ENCODE measurements at regions of chr18 and their contacts with region 1.

Region 1: DNA sequence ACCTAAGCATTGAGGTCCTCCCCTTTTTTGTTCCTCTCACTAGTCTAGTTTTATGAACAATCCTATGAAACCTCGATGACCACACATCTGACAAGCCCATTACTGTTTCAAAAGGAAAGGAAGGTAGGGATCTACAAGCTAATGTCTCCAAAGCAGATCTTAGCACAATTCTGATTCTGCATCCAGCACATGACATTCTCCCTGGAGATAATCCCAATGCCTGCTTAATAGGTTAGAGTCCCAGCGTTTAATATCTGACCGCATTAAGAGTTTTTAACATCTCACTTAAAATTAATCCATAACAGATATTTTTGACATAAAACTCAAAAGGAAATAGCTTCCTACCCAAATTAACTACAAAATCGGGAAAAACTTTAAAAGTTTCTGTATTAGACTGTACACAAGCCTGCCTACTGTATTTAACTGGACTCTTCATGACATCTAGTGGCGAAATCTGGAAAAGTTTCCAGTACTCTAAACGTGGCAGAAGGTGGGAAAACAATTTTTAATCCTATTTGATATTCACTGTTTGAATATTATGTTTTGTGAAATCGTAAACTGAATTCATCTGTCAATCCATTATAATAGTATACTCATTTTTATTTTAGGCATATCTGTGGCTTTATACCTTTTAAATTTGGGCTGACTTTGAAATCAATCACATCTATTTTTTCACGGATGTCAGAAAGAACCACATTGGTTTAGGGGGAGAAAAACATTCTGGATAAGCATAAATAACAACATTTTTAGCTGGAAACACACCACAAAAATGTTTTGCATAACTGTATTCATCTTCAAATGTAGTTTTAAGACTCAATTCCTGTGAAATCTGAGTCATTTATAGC is 62.4 kb downstream of the TXNL1 start:
- DNase-seq: peak; percentile 68
- ATAC-seq: peak; percentile 54
- H3K4me3 ChIP-seq: no peak overlapping the region
- H3K4me3 Mint-ChIP-seq: no peak overlapping the region
- H3K27ac ChIP-seq: no peak overlapping the region
- H3K27ac Mint-ChIP-seq: no peak overlapping the region
- H3K4me1 ChIP-seq: no peaks in the 10 kb centered on the region
- H3K4me1 Mint-ChIP-seq: no peaks in the 10 kb centered on the region
- H3K27me3 ChIP-seq: no peaks in the 10 kb centered on the region
- H3K27me3 Mint-ChIP-seq: no peaks in the 10 kb centered on the region
- CTCF ChIP-seq: peak; percentile 83

Region 2: GRCh38 chr18:55096261-55096951 is 1479.6 kb before region 1 on chr18:
- CTCF ChIA-PET with region 1: interaction called, 5 read pairs
- POLR2A ChIA-PET with region 1: no interaction called
- intact Hi-C with region 1: loop called (anchors 2 kb)
- DNase-seq: peak; percentile 47
- ATAC-seq: peak; percentile 69
- H3K4me3 ChIP-seq: no peak overlapping the region
- H3K4me3 Mint-ChIP-seq: peak overlapping the region; percentile 3
- H3K27ac ChIP-seq: no peak overlapping the region
- H3K27ac Mint-ChIP-seq: peak overlapping the region; percentile 39
- H3K4me1 ChIP-seq: peaks cover 18 to 28% of the 10 kb centered on the region in 2 donors
- H3K4me1 Mint-ChIP-seq: peaks cover 41% of the 10 kb centered on the region
- H3K27me3 ChIP-seq: no peaks in the 10 kb centered on the region
- H3K27me3 Mint-ChIP-seq: no peaks in the 10 kb centered on the region
- CTCF ChIP-seq: peak; percentile 11

Region 3: GRCh38 chr18:55343396-55344073 is 1232.5 kb before region 1 on chr18:
- CTCF ChIA-PET with region 1: interaction called, 11 read pairs
- POLR2A ChIA-PET with region 1: no interaction called
- intact Hi-C with region 1: loop called (anchors 2 kb)
- DNase-seq: peak; percentile 56
- ATAC-seq: peak; percentile 65
- H3K4me3 ChIP-seq: no peak overlapping the region
- H3K4me3 Mint-ChIP-seq: no peak overlapping the region
- H3K27ac ChIP-seq: no peak overlapping the region
- H3K27ac Mint-ChIP-seq: no peak overlapping the region
- H3K4me1 ChIP-seq: peaks cover 9 to 14% of the 10 kb centered on the region in 2 donors
- H3K4me1 Mint-ChIP-seq: peaks cover 19% of the 10 kb centered on the region
- H3K27me3 ChIP-seq: no peaks in the 10 kb centered on the region
- H3K27me3 Mint-ChIP-seq: no peaks in the 10 kb centered on the region
- CTCF ChIP-seq: peak; percentile 79

Measured in B cell (primary cell).